Heart left ventricle (tissue), 16 donors: ENCODE measurements at regions of chr6 and their contacts with region 1.

Region 1: DNA sequence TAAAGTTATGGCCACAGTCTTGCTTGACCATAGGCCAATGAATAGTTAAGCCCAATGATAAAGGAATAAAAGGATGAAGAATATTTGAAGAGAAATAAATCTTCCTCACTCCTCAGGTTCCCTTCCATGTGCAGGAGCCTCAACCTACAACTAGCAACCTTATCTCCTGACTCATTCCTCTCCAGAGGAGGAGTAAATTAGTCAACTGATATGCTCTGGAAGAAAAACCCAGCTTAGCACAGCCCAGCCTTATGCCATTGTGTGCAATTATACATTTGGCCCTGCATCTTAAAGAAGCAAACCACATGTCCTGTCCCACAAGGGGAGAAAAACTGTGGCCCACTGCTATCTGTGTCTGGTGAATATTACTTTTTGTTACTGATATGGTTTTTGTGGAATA is 82.1 kb downstream of the PHIP start:
- DNase-seq: no peak
- ATAC-seq: no peak
- H3K4me3 ChIP-seq: no peak overlapping the region
- H3K27ac ChIP-seq: no peak overlapping the region
- H3K4me1 ChIP-seq: no peaks in the 10 kb centered on the region
- H3K27me3 ChIP-seq: no peaks in the 10 kb centered on the region
- CTCF ChIP-seq: no peak
- POLR2A ChIP-seq: no peak

Region 2: DNA sequence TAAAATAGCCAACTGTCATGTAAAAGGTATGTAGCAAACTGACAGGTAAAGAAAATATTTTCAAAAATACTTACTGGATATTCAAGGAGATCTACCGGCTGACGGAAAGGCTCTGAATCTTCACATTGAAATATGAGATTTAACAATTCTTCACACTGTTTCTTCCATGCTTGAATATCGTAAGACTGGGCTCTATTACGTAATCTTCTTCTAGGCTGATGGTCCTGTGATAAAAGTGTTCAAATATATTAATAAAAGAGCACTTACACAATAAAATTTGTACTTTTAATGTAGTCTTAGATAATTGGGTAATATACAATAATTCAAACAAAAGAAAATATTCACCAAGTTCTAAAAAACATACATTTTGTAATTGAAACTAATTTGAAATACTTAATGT is 41.2 kb before region 1 on chr6:
- intact Hi-C with region 1: loop called in 1 of 10 experiments (anchors 5 kb)
- DNase-seq: no peak
- ATAC-seq: no peak
- H3K4me3 ChIP-seq: no peak overlapping the region
- H3K27ac ChIP-seq: no peak overlapping the region
- H3K4me1 ChIP-seq: no peaks in the 10 kb centered on the region
- H3K27me3 ChIP-seq: no peaks in the 10 kb centered on the region
- CTCF ChIP-seq: no peak
- POLR2A ChIP-seq: no peak

Region 3: GRCh38 chr6:78966542-78966941 is 29.4 kb before region 1 on chr6:
- intact Hi-C with region 1: loop called in 1 of 10 experiments (anchors 5 kb)
- DNase-seq: no peak
- ATAC-seq: no peak
- H3K4me3 ChIP-seq: no peak overlapping the region
- H3K27ac ChIP-seq: no peak overlapping the region
- H3K4me1 ChIP-seq: peaks cover 0 to 4% (median 0%) of the 10 kb centered on the region in 12 donors
- H3K27me3 ChIP-seq: no peaks in the 10 kb centered on the region
- CTCF ChIP-seq: no peak
- POLR2A ChIP-seq: no peak

Region 4: GRCh38 chr6:79888587-79888986 is 892.6 kb after region 1 on chr6:
- intact Hi-C with region 1: no loop called
- DNase-seq: no peak
- ATAC-seq: no peak
- H3K4me3 ChIP-seq: no peak overlapping the region
- H3K27ac ChIP-seq: no peak overlapping the region
- H3K4me1 ChIP-seq: no peaks in the 10 kb centered on the region
- H3K27me3 ChIP-seq: no peaks in the 10 kb centered on the region
- CTCF ChIP-seq: no peak
- POLR2A ChIP-seq: no peak